ENCODE measurements at regions of chr1 and their contacts with region 1.

Region 1: DNA sequence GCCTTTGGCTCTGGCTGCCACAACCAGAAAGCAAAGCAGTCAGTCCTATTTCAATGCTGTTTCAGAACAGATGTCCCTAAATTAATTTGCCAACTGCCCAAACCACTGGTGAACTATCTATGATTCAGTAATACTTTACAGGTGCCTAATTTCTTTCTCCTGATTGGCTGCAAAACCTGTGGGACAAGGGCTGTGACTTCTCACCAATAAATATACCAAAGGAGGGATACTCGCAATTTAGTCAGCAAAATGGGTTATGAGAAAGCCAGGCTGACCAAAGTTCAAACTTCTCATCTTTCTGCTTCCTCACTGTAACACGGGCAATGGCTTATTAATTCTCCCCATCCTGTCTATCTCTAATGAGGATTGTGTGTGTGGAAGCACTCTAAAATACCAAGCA is 12.8 kb downstream of the GPN2 start:
- DNase-seq: no peak
- H3K4me3 ChIP-seq: no peak overlapping the region
- H3K27ac ChIP-seq: no peak overlapping the region
- H3K4me1 ChIP-seq: no peaks in the 10 kb centered on the region
- H3K27me3 ChIP-seq: no peaks in the 10 kb centered on the region
- CTCF ChIP-seq: no peak
- POLR2A ChIP-seq: no peak

Region 2: DNA sequence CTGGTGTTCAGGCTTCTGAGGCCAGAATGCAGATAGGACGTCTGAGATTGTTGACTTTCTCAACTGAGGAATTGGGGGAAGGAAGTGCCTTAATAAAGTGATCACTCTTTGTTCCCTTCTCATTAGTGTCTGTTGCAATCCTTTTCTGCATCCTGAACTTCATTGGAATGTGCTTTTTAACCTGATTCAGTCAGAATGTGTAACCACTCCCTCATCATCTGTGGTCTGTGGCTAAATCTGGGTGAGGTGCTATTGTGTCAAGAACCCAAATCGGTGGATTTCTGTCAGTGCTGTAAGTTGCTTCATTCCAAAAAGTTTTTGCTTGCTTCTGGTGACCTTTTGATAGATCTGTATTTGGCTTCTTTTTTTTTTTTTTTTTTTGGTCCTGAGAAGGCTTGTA is 143.3 kb before region 1 on chr1:
- CTCF ChIA-PET with region 1: no interaction called
- POLR2A ChIA-PET with region 1: no interaction called
- dilution Hi-C with region 1: no loop called
- intact Hi-C with region 1: no loop called
- DNase-seq: no peak
- H3K4me3 ChIP-seq: no peak overlapping the region
- H3K27ac ChIP-seq: no peak overlapping the region
- H3K4me1 ChIP-seq: peaks cover 13% of the 10 kb centered on the region
- H3K27me3 ChIP-seq: no peaks in the 10 kb centered on the region
- CTCF ChIP-seq: no peak
- POLR2A ChIP-seq: no peak

Region 3: DNA sequence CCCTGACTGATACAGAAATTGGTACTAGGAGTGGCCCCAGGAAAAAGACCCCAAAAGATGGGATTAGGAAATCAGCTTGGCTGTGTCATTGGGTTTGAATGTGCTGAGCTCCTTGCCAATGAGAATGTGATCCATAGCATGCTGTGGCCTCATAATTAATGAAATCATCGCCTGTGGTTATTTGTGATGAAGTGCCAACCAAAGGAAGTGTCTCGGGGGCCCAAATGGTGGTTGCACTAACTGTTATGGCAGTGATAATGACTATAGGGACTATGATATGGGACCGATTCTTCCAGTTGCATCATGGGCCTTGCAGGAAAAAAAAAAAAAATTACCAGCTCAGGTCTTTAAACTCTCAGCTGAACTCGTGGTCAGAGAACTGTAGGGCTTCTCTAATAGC is 66.3 kb before region 1 on chr1:
- CTCF ChIA-PET with region 1: interaction called, 45 read pairs
- POLR2A ChIA-PET with region 1: no interaction called
- dilution Hi-C with region 1: no loop called
- intact Hi-C with region 1: loop called (anchors 1 kb)
- DNase-seq: no peak
- H3K4me3 ChIP-seq: no peak overlapping the region
- H3K27ac ChIP-seq: no peak overlapping the region
- H3K4me1 ChIP-seq: no peaks in the 10 kb centered on the region
- H3K27me3 ChIP-seq: no peaks in the 10 kb centered on the region
- CTCF ChIP-seq: no peak
- POLR2A ChIP-seq: no peak

Region 4: DNA sequence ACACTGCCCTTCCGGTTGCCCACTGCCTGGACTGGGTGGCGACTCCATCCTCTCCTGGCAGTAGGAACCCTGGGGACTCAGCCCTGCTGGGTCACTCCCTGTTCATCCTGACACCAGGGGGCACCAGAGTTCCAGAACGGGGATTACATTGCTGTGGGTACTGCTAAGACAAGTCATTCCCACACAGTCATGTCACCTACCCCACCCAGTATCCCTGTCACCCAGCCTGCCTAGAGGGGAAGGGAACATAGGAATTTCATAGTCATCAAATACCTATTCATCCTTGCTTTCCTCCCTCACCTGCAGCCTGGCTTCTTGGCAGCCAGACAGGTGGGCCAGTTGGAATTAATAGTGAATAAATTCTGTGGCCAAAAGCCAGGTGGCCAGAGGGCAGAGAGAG is 24.2 kb before region 1 on chr1:
- CTCF ChIA-PET with region 1: interaction called, 27 read pairs
- POLR2A ChIA-PET with region 1: no interaction called
- dilution Hi-C with region 1: no loop called
- intact Hi-C with region 1: loop called (anchors 1 kb)
- DNase-seq: peak; percentile 79
- H3K4me3 ChIP-seq: no peak overlapping the region
- H3K27ac ChIP-seq: no peak overlapping the region
- H3K4me1 ChIP-seq: peaks cover 9% of the 10 kb centered on the region
- H3K27me3 ChIP-seq: no peaks in the 10 kb centered on the region
- CTCF ChIP-seq: peak; percentile 85 to 89
- POLR2A ChIP-seq: no peak

Region 5: DNA sequence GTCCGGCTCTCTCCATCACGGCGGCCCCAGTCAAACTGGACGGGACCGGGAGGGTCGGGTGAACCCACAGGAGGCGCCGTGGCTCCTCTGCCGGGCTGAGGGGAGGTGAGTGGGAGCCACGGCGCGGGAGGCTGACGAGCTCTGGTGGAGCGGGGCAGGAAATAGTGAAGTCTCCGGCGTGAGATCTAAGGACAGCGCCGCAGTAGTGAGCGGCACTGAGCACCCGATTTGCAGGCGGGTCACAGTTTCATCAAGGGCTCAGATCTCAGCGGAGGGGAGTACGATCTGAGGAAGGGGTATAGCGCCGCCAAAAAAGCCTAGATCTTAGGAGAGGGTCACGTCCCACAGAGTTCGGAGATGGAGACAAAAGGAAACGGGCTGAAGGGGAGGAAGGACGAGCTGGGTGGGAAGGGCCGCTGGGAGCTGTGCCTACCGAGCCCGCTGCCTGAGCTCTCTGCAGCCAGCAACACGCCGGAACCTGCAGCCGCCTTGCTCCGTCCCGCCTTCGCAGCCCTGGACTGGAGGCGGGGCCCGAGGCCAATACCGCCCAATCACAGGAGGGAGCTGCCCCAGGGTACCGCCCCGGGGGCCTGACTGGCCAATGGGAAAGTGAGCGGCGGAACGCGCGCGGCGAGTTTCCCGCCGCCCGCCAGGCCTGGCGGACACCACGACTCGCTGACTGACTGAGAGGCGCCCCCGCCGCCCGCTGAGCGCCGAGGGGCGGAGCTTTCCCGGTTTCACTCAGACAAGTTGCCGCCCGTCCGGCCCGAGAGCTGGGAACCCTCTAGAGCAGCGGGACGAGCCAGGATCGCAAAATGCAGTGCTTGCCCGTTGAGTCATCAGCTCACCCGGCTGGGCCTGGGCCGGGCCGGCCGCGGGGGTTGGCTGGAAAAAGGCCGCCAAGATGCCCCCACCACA is 12.5 kb before region 1 on chr1:
- CTCF ChIA-PET with region 1: interaction called, 17 read pairs
- POLR2A ChIA-PET with region 1: no interaction called
- dilution Hi-C with region 1: no loop called
- intact Hi-C with region 1: loop called (anchors 1 kb)
- DNase-seq: peak; percentile 99
- H3K4me3 ChIP-seq: peak overlapping the region; percentile 38 to 73 (median 52)
- H3K27ac ChIP-seq: peak overlapping the region; percentile 91
- H3K4me1 ChIP-seq: peaks cover 11% of the 10 kb centered on the region
- H3K27me3 ChIP-seq: no peaks in the 10 kb centered on the region
- CTCF ChIP-seq: peak in 1 of 2 donors; percentile 8
- POLR2A ChIP-seq: peak; percentile 94

Region 6: DNA sequence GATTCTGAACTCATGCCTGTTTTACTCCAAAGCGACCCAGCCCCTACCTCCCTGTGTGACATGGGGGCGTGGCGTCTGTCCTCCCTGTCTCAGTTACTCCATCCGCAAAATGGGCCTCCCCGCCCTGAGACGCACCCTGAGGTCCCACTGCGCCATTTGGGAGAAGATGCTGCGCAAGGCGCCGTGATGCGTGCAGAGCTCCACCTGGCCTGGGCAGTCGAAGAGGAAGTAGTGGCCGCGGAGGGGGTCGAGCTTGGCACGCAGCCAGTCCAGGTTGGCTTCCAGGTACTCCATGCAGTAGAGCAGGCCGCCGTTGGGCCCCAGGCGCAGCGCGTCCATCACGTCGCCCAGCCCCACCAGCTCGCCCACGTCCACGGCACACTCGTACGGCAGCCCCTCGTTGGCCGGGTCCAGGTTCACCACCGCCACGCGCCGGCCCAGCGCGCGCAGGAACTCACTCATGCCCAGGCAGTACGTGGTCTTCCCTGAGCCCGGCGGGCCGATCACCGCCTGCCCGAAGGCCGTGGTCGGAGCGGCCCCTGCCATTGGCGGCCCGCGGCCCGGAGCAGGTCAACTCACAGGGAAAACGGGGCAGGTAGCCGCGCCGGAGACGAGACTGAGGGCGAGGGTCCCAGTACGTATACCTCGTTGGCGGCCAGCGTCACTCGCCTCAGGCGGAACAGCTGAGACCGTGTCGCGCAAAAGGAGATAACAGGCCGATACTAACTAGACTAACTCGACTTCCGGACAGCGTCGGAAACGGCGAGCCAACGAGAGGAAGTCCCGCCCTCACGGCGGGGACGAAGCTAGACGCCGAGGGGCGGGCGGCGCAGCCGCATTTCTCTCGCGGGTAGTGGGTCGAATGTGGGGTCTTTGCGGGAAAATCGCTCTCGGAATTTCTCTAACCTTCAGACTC is 12.5 kb after region 1 on chr1 and contains the start of gene GPN2:
- CTCF ChIA-PET with region 1: interaction called, 18 read pairs
- POLR2A ChIA-PET with region 1: no interaction called
- dilution Hi-C with region 1: no loop called
- intact Hi-C with region 1: no loop called
- DNase-seq: peak; percentile 87
- H3K4me3 ChIP-seq: peak within 1 kb of the TSS; percentile 18 to 82 (median 54)
- H3K27ac ChIP-seq: peak within 1 kb of the TSS; percentile 46
- H3K4me1 ChIP-seq: peaks cover 6% of the 10 kb centered on the region
- H3K27me3 ChIP-seq: no peaks in the 10 kb centered on the region
- CTCF ChIP-seq: no peak
- POLR2A ChIP-seq: peak; percentile 95
- total RNA-seq, gene GPN2: 36.7 and 37.4 TPM in 2 replicates